Tibial artery (tissue), 4 donors: ENCODE measurements at regions of chr17 and their contacts with region 1.

Region 1: DNA sequence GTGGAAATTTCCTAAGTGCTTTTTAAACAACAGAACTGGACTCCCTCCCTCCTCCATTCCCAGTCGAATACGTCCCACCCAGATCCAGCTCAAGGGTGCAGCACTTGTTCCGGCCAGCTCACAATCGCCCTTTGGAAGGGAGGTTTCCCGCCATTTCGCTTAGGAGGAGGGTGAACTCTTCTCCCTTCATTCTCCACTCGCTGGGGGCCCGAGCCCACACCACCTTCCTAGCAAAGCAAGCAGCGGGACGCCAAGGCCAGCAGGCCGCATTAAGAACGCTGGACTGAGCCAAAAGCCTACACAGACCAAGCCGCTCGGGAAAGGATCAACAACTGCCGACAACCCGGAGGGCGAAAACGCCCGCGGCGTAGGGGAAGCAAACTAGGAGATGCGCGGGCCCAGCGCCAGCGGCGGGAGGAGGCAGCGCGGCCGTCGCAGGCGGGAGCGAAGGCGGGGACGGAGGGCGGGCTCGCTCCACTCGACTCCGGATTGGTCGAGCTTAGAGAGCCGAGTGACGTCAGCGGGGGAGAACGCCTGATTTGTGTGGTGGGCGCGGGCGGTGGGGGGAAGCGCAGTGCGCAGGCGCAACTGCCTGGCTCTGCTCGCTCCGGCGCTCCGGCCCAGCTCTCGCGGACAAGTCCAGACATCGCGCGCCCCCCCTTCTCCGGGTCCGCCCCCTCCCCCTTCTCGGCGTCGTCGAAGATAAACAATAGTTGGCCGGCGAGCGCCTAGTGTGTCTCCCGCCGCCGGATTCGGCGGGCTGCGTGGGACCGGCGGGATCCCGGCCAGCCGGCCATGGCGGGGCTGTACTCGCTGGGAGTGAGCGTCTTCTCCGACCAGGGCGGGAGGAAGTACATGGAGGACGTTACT is at the start of gene PPM1D:
- DNase-seq: peak; percentile 99
- H3K4me3 ChIP-seq: peak within 1 kb of the TSS; percentile 72 to 94
- H3K27ac ChIP-seq: peak within 1 kb of the TSS; percentile 93 to 98
- H3K4me1 ChIP-seq: peaks cover 0 to 28% (median 11%) of the 10 kb centered on the region in 4 donors
- H3K27me3 ChIP-seq: no peaks in the 10 kb centered on the region
- CTCF ChIP-seq: peak in 1 of 2 experiments; percentile 20

Region 2: DNA sequence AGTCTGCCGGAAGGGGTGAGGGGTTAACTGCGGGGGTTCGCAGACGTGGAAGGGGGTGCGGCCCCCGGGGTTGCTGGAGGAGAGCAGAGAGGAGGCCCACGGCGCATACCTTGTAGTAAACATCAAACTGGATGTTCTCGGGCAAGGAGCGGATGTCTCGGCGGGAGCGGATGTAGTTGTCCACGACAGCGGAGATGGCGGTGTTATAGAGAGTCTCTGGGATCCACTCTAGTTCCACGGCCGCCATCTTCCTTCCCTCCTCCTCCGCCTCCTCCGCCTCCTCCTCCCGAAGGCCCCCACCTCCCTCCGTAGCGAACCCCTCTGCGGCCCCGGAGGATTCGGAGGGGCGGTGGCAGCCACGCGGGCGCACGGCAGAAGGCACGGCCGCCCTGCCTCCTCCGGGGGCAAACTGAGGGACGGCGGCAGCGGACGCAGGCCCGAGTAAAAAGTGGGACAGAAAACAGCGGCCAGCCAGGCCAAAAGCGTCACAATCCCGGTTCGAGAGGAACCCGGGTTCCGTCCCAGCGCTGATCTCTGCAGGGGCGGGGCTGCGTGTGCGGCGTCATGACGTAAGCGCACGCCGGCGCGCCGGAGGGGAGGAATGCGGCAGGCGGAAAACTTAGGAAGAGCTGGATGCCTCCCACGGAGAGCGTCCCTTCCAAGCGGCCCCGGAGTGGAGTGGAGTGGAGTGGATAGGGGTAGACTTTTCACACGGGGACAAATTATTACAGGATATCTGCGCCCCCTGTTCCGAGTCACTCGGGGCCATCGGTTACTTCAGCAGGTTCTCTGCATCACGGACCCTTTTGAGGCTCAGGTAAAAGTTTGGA is 74.0 kb before region 1 on chr17 and contains the start of gene APPBP2:
- intact Hi-C with region 1: loop called (anchors 10 kb)
- DNase-seq: peak; percentile 85 to 93
- H3K4me3 ChIP-seq: peak within 1 kb of the TSS; percentile 85 to 86
- H3K27ac ChIP-seq: peak within 1 kb of the TSS; percentile 98 to 99
- H3K4me1 ChIP-seq: peaks cover 0 to 40% (median 18%) of the 10 kb centered on the region in 4 donors
- H3K27me3 ChIP-seq: no peaks in the 10 kb centered on the region
- CTCF ChIP-seq: no peak

Region 3: DNA sequence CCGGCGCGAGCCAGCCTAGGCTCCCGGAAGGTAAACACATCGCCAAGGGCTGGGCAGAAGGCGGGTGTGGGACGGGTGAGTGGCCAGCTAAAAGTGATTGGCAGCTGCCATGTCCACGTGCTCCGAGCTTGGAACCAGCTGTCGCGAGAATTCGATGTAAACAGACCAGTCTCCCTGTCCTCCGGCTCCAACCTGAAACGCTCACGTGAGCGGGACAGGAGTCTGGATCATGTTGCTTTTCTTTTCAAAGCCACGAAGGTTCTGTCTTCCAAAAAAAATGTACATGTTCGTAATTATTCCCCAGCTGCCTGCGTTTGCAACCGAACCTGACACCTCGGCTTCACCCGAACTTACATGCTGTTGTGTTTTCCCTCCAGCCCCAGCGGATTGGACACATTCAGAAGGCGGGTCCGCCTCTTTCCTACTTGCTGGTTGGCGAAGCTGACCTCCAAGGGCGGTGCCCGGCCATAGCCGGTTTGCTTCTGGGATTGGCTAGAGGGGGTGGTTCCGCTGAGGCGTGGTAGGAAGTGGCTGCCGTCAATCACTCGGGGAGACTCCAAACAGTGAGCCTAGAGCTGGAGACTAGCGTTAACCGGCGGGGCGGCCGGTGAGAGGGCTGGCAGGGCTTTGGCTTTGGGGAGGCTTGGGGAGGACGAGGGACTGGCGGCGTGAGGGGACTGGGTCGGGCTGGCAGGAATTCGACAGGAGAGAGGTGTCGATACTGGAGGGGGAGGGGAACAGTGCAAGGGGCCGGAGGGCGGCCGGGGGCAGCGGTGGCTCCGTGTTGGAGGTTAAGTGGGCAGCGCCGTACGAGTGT is 77.7 kb after region 1 on chr17 and contains the start of gene BCAS3:
- intact Hi-C with region 1: loop called (anchors 5 kb)
- DNase-seq: peak; percentile 99
- H3K4me3 ChIP-seq: peak within 1 kb of the TSS; percentile 67 to 91
- H3K27ac ChIP-seq: peak within 1 kb of the TSS; percentile 78 to 85
- H3K4me1 ChIP-seq: peaks cover 0 to 15% (median 5%) of the 10 kb centered on the region in 4 donors
- H3K27me3 ChIP-seq: no peaks in the 10 kb centered on the region
- CTCF ChIP-seq: peak in 1 of 2 experiments; percentile 8